A549 (cell line): ENCODE measurements at regions of chr10 and their contacts with region 1.

Region 1: DNA sequence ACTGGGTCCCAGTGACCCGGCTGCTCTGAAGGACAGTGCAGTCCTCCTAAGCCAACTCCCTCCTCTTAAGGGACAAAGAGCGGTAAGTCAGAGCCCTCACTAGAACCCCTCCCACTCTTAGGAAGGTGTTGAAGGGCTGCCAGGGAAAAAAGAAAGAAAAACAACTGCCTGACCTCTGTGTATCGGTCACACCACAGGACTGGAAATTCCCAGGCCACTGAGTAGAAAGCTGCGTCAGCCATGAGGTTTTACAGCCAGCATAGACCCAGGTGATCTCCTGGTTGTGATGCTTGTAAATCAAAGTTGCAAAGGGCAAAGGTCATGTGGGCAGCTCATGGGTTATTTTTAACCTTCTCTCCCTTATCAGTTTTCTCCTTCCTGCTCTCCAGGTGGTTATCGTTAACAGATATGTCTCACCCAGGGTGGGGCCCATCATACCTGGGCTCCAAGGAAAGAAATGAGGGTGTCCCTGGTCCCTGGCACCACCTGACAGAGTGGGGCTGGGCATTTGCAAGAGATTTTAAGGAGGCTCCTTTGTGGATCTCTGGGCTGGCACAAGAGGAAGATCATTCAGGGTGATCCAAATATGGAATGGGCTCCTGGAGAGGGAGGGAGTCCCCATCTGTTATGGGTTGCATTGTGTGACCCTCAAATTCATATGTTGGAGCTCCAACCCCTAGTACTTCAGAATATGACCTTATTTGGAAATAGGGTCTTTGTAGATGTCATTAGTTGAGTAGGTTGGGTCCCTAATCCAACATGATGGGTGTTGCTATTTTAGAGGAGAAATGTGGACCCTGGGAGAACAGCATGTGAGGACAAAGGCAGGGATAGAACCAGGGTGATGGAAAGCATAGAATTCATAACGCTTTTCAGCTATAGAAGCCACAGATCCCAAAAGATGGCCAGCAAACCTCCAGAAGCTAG is 91.3 kb upstream of the SMNDC1 start:
- DNase-seq: peak; percentile 79 to 98
- ATAC-seq: peak; percentile 24 to 63; a peak in 4 of 6 replicates
- H3K4me3 ChIP-seq: no peak overlapping the region
- H3K27ac ChIP-seq: peak overlapping the region; percentile 99
- H3K4me1 ChIP-seq: peaks cover 84% of the 10 kb centered on the region
- CTCF ChIP-seq: no peak
- EP300 ChIP-seq: peak; percentile 89 to 98; a peak in 4 of 5 replicates
- POLR2A ChIP-seq: no peak
- RAD21 ChIP-seq: peak in 1 of 2 experiments; percentile 58; a peak in 4 of 5 replicates

Region 2: DNA sequence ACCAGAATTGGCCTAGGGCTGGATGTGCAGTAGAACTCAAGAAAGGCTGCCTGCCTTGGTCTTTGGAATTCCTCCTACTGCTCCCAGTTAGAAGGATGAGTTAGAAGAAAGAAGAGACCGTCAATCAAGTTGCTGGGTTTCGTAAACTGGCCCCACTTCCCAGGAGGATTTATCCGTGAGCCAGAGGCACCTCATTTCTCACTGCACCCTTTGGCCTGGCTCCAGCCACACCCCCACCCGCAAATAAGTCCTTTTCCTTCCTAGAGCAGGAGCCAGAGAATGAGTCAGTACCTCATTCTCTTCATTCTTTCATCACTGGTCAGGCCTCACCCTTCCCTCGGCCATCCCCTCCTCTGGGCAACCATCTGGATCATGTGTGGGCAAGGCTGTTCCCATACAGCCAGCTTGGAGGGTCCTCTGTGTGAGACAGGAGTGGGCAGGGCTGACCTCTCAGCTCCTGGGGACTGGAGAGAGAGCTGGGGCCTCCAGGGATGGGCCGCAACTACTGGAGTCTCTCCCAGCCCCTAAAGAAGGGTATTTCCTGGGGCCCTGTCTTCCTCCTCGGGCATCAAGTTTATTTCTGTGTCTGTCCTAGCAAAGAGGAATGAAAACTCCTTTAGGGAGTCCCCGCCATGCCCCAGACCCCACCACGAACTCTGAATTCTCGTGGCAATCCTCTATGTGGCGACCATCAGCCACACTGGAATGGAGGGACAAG is 14.5 kb after region 1 on chr10:
- CTCF ChIA-PET with region 1: interaction called, 8 read pairs
- POLR2A ChIA-PET with region 1: interaction called, 13 read pairs
- DNase-seq: peak; percentile 96 to 98
- ATAC-seq: peak; percentile 75 to 87
- H3K4me3 ChIP-seq: no peak overlapping the region
- H3K27ac ChIP-seq: peak overlapping the region; percentile 99
- H3K4me1 ChIP-seq: peaks cover 85% of the 10 kb centered on the region
- CTCF ChIP-seq: no peak
- EP300 ChIP-seq: peak; percentile 90 to 94; a peak in 4 of 5 replicates
- POLR2A ChIP-seq: no peak
- RAD21 ChIP-seq: peak; percentile 33 to 62; a peak in 4 of 5 replicates

Region 3: GRCh38 chr10:110425684-110426293 is 29.8 kb after region 1 on chr10:
- CTCF ChIA-PET with region 1: interaction called, 4 read pairs
- POLR2A ChIA-PET with region 1: interaction called, 12 read pairs
- DNase-seq: peak; percentile 76 to 97
- ATAC-seq: peak; percentile 69 to 70
- H3K4me3 ChIP-seq: no peak overlapping the region
- H3K27ac ChIP-seq: peak overlapping the region; percentile 96 to 99
- H3K4me1 ChIP-seq: peaks cover 96% of the 10 kb centered on the region
- CTCF ChIP-seq: no peak
- EP300 ChIP-seq: peak in 1 of 2 experiments; percentile 30; a peak in 1 of 5 replicates
- POLR2A ChIP-seq: no peak
- RAD21 ChIP-seq: no peak; a peak in 1 of 5 replicates